AG04449 (cell line): ENCODE measurements at regions of chr13 and their contacts with region 1.

Region 1: DNA sequence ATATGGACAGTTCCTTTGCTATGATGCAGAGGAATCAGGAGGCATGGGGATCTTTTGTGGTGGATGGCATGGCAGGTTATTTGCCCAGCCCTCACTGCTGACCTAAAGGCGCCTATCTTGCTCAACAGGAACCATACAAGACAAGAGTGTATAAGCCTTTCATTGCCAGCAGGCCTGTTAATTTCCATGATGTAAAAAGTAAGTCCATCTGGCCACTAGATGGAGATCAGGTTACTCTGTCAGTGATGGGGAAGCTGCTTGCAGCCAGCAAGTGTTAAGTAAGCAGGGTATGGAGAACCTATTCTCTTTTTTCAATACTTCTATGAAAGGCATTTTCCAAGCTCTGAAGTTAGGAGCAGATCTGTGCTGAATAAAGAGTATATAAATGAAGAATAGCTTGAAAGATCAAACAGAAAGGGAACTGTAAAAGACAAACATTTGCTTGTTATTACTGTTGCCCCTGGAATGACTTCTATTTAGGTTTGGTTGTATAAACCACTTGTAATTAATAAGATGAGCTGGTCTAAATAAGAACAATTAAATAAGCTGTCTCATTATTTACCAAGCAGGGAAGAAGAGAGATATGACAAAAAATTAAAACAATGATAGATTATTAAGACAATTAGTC is 210.9 kb downstream of the RGCC start:
- DNase-seq: peak; percentile 81
- H3K4me3 ChIP-seq: no peak overlapping the region
- CTCF ChIP-seq: peak; percentile 72

Region 2: GRCh38 chr13:41162151-41162550 is 506.1 kb before region 1 on chr13:
- CTCF ChIA-PET with region 1: no interaction called
- POLR2A ChIA-PET with region 1: no interaction called
- DNase-seq: no peak
- H3K4me3 ChIP-seq: no peak overlapping the region
- CTCF ChIP-seq: no peak

Region 3: DNA sequence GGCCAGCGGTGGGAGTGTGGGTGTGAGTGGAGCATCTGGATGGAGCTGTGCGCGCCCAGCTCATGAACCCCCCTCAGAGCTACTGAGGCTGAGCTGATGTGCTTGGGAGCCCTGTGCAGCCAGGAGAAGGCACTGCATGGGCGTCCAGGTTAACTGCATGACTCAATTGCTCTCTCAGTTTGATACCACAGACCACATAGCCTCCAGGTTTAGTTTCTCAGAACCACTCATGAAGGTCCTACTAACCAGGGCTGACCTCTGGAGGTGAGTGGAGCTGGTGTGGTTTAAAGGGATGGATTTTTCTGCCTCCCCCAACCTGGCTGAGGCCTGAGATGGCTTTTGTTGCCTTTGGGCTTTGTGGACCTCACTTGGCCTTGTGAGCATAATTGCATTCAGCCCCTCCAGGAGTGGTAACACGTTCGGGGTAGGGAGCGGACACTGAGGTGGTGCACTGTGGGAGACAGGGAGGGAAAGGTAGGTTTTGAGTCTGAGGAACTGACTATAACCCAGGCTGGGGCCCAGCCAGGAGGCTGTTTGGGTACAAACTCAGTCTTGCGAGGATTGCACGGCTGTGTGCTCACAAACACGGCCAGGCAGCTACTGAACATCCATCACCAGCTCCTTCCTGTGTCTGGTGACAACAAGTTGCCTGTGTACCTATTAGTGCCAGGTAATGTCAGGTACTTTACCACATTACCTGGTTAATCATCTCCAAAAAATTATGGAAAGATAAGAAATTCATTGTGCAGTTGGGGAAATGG is 113.4 kb before region 1 on chr13:
- CTCF ChIA-PET with region 1: no interaction called
- POLR2A ChIA-PET with region 1: no interaction called
- DNase-seq: no peak
- H3K4me3 ChIP-seq: no peak overlapping the region
- CTCF ChIP-seq: no peak

Region 4: GRCh38 chr13:41652727-41653361 is 15.4 kb before region 1 on chr13:
- CTCF ChIA-PET with region 1: interaction called, 55 read pairs
- POLR2A ChIA-PET with region 1: no interaction called
- DNase-seq: no peak
- H3K4me3 ChIP-seq: no peak overlapping the region
- CTCF ChIP-seq: peak; percentile 12

Region 5: GRCh38 chr13:41678249-41678648 is 10.0 kb after region 1 on chr13:
- CTCF ChIA-PET with region 1: interaction called, 43 read pairs
- POLR2A ChIA-PET with region 1: no interaction called
- DNase-seq: no peak
- H3K4me3 ChIP-seq: no peak overlapping the region
- CTCF ChIP-seq: no peak

Region 6: GRCh38 chr13:41942462-41943094 is 274.3 kb after region 1 on chr13:
- CTCF ChIA-PET with region 1: interaction called, 37 read pairs
- POLR2A ChIA-PET with region 1: no interaction called
- DNase-seq: peak; percentile 56
- H3K4me3 ChIP-seq: no peak overlapping the region
- CTCF ChIP-seq: peak; percentile 54

Region 7: DNA sequence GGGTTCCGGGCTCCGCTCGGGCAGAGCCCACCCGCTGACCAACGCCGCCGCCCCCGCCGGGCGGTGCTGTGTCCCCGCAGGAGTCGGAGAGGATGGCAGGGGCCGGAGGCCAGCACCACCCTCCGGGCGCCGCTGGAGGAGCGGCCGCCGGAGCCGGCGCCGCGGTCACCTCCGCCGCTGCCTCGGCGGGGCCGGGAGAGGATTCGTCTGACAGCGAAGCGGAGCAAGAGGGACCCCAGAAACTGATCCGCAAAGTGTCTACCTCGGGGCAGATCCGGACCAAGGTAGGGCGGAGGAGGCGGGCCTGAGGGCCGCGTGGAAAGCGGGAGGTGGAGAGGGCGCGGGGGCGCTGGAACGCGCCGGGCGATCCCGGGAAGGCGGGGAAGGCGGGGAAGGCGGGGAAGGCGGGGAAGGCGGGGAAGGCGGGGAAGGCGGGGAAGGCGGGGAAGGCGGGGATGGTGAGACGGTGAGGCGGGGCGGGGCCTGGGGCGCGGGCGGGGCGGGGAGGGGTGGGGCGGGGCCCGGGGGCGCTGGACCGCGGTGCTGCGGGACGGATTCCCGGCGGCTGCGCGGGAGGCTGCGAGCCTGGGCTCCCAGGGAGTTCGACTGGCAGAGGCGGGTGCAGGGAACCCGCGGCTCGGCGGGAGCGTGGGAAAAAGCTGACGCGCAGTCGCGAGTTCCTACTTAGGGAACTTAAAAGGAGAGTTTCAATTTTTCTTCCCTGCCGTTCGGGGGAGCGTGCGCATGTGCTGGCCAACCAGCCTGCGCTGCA is 380.6 kb after region 1 on chr13:
- CTCF ChIA-PET with region 1: interaction called, 17 read pairs
- POLR2A ChIA-PET with region 1: no interaction called
- DNase-seq: no peak
- H3K4me3 ChIP-seq: peak overlapping the region; percentile 78
- CTCF ChIP-seq: peak; percentile 6

Region 8: DNA sequence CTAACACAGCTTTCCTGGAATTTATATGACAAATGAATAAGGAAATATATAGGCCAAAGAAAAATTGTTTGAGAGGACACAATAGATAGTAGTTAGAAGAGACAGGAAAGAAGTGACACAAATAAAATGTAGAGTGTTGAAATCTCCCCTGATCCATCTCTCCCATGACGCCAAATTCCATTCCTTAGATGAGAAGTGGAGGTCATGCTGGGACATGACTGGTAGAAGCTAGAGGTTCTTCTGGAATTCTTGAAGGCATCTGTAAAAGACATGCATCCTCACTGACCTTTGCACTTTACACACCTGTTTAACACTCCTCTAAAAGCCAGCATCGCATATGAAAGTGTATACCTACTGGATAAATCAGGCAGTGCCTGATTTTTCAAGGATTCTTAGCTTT is 448.0 kb after region 1 on chr13:
- CTCF ChIA-PET with region 1: interaction called, 182 read pairs
- POLR2A ChIA-PET with region 1: no interaction called
- DNase-seq: no peak
- H3K4me3 ChIP-seq: no peak overlapping the region
- CTCF ChIP-seq: no peak